Activated CD8-positive, alpha-beta T cell treated with anti-CD3 and anti-CD28 coated beads, Interleukin-2, amount 10 ng/mL, durations not matched to agents 7 days and 5 days (primary cell): ENCODE measurements at regions of chr1 and their contacts with region 1.

Region 1: DNA sequence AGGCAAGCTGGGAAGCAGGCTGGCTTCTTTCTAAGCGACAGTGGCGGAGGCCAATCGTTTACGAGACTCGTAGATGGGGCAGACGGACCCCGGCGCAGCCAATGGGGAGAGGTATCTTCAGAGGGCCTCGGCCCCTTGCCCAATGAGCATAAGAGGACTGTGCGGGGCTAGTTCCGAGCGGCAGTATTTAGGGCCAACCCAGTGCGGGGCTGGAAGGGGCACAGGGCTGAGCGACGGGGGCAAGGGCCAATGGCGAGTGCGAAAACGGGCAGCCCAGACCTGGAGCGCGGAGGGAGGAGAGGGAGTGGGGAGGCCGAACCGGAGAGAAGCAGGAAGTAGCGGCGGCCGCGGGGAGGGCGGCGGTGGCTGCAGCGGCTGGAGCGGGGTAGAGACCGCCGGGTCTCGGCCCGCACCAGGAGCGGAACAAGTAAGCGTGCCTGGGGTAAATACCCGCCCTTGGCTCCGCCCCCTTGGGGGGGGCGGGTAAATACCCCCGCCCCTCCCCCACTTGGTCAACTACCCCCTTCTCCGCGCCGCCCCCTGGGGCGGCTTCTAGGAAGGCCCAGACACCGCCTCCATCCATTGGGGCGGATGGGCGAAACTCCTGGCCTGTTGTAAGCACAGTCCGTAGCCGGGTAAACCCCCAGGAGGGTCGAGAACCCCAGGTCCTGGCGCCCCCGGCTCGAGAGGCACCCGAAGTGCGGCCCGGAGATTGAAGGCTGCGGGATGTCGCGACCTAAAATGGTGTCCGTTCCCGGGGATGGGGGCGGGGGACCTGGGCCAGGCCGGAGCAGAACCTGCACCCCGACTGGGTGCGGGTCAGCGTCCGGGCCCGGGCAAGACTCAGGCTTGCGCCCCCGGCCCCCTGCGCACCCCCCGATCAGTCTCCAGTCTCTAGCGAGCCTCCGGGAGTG is at the start of gene ZNF687:
- DNase-seq: peak; percentile 99
- ATAC-seq: peak; percentile 94
- H3K4me3 Mint-ChIP-seq: peak within 1 kb of the TSS; percentile 98
- H3K27ac Mint-ChIP-seq: peak within 1 kb of the TSS; percentile 100
- H3K4me1 Mint-ChIP-seq: peaks cover 19% of the 10 kb centered on the region
- H3K27me3 Mint-ChIP-seq: no peaks in the 10 kb centered on the region
- total RNA-seq, gene ZNF687: 25.5 to 26.6 TPM

Region 2: DNA sequence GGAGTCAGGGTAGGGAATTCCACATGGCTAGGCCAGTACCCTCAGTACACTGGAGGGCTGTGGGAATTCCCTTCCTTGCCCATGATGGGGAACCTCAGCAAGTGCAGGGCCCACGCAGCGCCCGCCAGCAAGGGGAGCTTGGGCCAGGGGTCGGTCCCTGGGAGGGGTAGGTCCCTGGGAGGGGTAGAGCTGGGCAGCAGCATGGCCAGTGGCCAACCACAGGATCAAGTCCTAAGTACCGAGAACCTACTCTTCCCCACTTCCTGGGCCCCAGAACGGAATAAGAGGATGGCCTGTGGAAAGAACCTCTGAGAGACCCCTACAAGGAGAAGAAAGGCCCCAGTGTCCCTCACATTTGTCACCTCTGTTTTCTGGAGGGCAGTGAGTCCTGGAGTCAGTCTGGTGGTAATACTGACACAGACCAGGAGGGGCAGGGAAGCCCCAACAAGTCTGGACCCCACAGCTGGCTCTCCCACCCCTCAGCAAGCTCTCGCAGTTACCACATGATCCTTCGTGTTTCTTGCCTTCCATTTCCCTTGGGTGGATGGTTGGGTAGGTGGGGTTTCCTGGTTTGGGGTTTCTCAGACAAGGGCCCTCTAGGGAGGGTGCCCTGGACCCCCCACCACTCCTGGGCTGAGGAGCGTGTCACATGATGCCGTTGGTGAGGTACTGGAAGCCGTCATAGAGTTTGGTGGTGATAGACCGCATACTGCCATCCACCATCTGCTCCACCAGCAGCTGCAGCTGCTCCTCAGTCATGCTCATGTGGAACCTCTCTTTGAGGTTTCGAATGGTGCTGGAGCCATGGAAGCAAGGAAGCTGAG is 10.2 kb after region 1 on chr1:
- CTCF ChIA-PET with region 1: interaction called, 5 read pairs
- POLR2A ChIA-PET with region 1: interaction called, 10 read pairs
- DNase-seq: no peak
- ATAC-seq: no peak
- H3K4me3 Mint-ChIP-seq: no peak overlapping the region
- H3K27ac Mint-ChIP-seq: peak overlapping the region; percentile 43
- H3K4me1 Mint-ChIP-seq: peaks cover 5% of the 10 kb centered on the region
- H3K27me3 Mint-ChIP-seq: no peaks in the 10 kb centered on the region

Region 3: DNA sequence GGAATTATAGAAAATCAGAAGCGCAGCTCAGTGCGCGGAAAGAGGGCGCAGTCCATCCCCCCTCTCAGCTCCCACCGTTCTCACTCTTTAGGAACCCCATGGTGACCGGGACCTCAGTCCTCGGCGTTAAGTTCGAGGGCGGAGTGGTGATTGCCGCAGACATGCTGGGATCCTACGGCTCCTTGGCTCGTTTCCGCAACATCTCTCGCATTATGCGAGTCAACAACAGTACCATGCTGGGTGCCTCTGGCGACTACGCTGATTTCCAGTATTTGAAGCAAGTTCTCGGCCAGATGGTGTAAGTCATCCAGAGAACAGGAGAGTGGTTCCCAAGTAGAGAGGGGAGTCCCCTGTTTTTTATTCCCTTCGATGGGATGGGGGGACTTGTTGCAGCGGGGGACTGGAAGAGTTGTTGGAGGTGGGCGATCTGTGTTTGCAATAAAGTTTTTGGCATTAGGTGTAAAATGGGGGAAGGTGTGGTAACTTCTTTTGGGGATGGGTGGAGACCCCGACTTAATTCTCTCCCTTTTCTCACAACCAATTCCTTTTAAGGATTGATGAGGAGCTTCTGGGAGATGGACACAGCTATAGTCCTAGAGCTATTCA is 117.8 kb after region 1 on chr1:
- CTCF ChIA-PET with region 1: interaction called, 3 read pairs
- POLR2A ChIA-PET with region 1: interaction called, 11 read pairs
- DNase-seq: peak; percentile 38
- ATAC-seq: peak; percentile 12
- H3K4me3 Mint-ChIP-seq: peak overlapping the region; percentile 80
- H3K27ac Mint-ChIP-seq: peak overlapping the region; percentile 99
- H3K4me1 Mint-ChIP-seq: peaks cover 26% of the 10 kb centered on the region
- H3K27me3 Mint-ChIP-seq: peaks cover 7% of the 10 kb centered on the region